Ovary (tissue), 10 donors: ENCODE measurements at regions of chr12 and their contacts with region 1.

Region 1: DNA sequence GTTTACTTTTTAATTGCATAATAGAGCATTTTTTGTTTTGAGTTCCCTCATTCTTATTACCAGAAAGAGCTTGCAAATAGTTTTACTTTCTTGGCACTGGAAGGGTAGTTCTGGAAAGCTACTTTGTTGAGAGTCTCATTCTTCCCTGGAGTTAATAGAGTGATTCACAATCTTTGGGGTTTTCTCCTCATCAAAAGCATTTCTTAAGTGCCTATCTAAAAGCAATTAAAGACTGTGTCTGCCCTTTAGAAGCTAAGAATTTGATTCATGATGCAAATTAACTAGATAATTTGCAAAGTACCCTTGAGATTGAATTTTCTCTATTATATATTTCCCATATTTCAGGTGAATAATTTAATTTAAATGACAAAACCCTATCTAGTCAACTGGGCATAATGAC is 8.1 kb upstream of the BMAL2 start:
- DNase-seq: no peak
- H3K4me3 ChIP-seq: no peak overlapping the region
- H3K27ac ChIP-seq: no peak overlapping the region
- H3K4me1 ChIP-seq: no peaks in the 10 kb centered on the region
- H3K27me3 ChIP-seq: no peaks in the 10 kb centered on the region
- CTCF ChIP-seq: no peak
- EP300 ChIP-seq: no peak
- POLR2A ChIP-seq: no peak

Region 2: DNA sequence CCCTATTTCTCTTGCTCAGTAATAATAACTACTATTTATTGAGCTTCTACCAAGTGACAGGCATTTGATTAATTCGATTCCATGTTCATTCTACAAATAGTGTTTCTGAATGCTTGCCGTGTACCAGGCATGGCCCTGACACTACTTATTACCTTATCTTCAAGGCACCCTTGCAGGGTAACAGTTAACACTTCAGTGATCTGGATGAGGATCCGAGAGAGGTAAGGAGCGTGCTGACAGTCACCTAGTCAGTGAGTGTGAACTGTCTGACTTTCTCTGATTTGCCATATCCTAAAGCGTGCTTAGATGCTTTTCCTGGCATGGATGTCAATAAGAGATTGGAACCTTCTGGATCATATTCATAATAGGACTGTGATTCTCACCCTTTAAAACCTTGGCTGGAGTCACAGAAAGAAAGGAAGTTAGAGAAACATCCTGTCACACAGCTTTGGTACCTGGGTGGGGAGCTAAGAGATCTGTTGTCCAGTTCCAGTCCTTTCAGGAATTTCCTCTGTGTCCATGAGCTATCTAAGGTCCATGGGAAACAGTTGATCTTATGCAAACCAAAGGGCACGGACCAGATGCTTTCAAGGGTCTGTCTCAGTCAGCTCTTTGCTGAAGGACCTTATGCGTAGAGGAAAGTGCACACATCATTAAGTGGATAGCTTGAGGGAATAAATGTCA is 254.3 kb after region 1 on chr12:
- intact Hi-C with region 1: loop called in 1 of 4 experiments (anchors 5 kb)
- DNase-seq: no peak
- H3K4me3 ChIP-seq: no peak overlapping the region
- H3K27ac ChIP-seq: no peak overlapping the region
- H3K4me1 ChIP-seq: peaks cover 17% of the 10 kb centered on the region
- H3K27me3 ChIP-seq: no peaks in the 10 kb centered on the region
- CTCF ChIP-seq: no peak
- EP300 ChIP-seq: no peak
- POLR2A ChIP-seq: no peak